Ovary (tissue), 10 donors: ENCODE measurements at regions of chr7 and their contacts with region 1.

Region 1: DNA sequence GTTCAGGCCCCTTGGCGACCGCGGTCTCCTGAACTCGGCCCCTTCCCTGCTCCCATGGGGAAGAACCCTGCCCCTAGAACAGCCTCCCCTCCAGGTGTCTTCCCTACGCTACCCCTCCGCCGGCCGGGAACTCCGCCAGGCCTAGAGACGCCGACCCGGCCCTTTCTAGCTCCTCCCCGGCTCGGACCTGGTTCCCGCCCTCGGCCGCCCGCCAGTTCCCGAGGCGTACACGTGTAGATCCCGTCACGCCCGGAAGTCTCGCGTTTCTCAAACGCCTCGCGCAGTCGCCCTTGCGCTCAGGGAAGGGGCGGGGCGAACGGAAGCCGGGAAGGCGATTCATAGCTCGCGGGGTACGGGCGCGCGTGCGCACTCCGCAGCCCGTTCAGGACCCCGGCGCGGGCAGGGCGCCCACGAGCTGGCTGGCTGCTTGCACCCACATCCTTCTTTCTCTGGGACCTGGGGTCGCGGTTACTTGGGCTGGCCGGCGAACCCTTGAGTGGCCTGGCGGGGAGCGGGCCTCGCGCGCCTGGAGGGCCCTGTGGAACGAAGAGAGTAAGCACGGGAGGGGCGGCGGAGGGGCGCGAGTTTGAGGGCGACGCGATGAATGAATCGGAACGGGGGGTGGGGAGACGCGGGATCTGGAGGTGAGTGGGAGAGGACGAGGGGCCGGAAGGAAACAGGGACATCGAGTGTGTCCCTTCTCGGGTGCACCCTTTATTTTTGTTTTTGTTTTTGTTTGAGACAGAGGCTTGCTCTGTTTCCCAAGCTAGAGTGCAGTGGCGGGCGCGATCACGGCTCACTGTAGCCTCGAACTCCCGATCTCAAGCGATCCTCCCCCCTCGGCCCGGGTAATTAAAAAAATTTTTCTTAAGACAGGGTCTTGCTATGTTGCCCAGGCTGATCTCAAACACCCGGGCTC is at the start of gene POP7:
- DNase-seq: peak; percentile 100
- H3K4me3 ChIP-seq: peak within 1 kb of the TSS; percentile 85
- H3K27ac ChIP-seq: peak within 1 kb of the TSS; percentile 83 to 91
- H3K4me1 ChIP-seq: peaks cover 7% of the 10 kb centered on the region
- H3K27me3 ChIP-seq: no peaks in the 10 kb centered on the region
- CTCF ChIP-seq: no peak
- EP300 ChIP-seq: no peak
- POLR2A ChIP-seq: peak; percentile 38
- total RNA-seq, gene POP7: 13.8 to 29.2 (median 22.2) TPM

Region 2: GRCh38 chr7:100516135-100516812 is 189.7 kb before region 1 on chr7:
- intact Hi-C with region 1: no loop called
- DNase-seq: peak in 4 of 5 donors; percentile 33 to 59 (median 40)
- H3K4me3 ChIP-seq: no peak overlapping the region
- H3K27ac ChIP-seq: no peak overlapping the region
- H3K4me1 ChIP-seq: peaks cover 2% of the 10 kb centered on the region
- H3K27me3 ChIP-seq: no peaks in the 10 kb centered on the region
- CTCF ChIP-seq: no peak
- EP300 ChIP-seq: no peak
- POLR2A ChIP-seq: no peak

Region 3: GRCh38 chr7:100563809-100564400 is 142.1 kb before region 1 on chr7:
- intact Hi-C with region 1: no loop called
- DNase-seq: peak; percentile 74 to 88 (median 85)
- H3K4me3 ChIP-seq: no peak overlapping the region
- H3K27ac ChIP-seq: peak overlapping the region in 1 of 2 donors; percentile 18
- H3K4me1 ChIP-seq: peaks cover 15% of the 10 kb centered on the region
- H3K27me3 ChIP-seq: no peaks in the 10 kb centered on the region
- CTCF ChIP-seq: peak; percentile 79 to 90 (median 87)
- EP300 ChIP-seq: no peak
- POLR2A ChIP-seq: no peak

Region 4: GRCh38 chr7:100655908-100656674 is 49.9 kb before region 1 on chr7 and contains the start of gene ACTL6B:
- intact Hi-C with region 1: loop called in 1 of 4 experiments (anchors 10 kb)
- DNase-seq: peak; percentile 29 to 77 (median 52)
- H3K4me3 ChIP-seq: no peak within 1 kb of the TSS
- H3K27ac ChIP-seq: no peak within 1 kb of the TSS
- H3K4me1 ChIP-seq: no peaks in the 10 kb centered on the region
- H3K27me3 ChIP-seq: no peaks in the 10 kb centered on the region
- CTCF ChIP-seq: no peak
- EP300 ChIP-seq: no peak
- POLR2A ChIP-seq: no peak
- total RNA-seq, gene ACTL6B: not detected

Region 5: DNA sequence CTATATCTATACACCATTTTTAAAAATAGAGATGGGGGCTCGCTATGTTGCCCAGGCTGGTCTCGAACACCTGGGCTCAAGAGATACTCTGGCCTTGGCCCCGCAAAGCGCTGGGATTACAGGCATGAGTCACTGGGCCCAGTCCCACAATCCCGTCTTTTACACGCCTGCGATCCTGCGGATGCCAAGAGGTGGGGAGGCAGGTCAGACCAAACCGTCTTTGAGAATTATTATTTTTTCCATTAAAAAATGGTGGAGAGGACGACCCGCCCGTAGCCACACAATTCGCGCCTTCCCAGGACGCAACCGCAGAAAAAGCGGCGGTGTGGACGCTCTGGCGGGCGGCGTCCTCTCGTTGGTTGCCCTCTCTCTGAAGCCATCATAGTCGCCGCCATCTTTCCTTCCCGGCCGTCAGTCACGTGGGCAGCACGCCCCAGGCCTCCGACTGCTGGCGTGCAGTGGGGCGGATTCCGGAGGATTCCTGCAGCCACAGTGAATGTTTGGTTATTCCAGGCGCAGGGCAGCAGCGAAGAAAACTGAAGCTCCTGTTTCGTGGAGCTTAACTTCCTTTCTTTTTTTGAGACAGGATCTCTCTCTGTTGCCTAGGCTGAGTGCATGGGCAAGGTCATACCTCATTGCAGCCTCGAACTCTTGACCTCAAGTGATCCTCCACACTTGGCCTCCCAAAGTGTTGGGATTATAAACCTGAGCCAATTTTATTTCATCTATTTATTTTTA is 131.3 kb after region 1 on chr7:
- intact Hi-C with region 1: loop called in 1 of 4 experiments (anchors 5 kb)
- DNase-seq: peak; percentile 89 to 94 (median 92)
- H3K4me3 ChIP-seq: peak overlapping the region; percentile 40
- H3K27ac ChIP-seq: peak overlapping the region in 1 of 2 donors; percentile 69
- H3K4me1 ChIP-seq: peaks cover 3% of the 10 kb centered on the region
- H3K27me3 ChIP-seq: no peaks in the 10 kb centered on the region
- CTCF ChIP-seq: no peak
- EP300 ChIP-seq: no peak
- POLR2A ChIP-seq: peak; percentile 50

Region 6: DNA sequence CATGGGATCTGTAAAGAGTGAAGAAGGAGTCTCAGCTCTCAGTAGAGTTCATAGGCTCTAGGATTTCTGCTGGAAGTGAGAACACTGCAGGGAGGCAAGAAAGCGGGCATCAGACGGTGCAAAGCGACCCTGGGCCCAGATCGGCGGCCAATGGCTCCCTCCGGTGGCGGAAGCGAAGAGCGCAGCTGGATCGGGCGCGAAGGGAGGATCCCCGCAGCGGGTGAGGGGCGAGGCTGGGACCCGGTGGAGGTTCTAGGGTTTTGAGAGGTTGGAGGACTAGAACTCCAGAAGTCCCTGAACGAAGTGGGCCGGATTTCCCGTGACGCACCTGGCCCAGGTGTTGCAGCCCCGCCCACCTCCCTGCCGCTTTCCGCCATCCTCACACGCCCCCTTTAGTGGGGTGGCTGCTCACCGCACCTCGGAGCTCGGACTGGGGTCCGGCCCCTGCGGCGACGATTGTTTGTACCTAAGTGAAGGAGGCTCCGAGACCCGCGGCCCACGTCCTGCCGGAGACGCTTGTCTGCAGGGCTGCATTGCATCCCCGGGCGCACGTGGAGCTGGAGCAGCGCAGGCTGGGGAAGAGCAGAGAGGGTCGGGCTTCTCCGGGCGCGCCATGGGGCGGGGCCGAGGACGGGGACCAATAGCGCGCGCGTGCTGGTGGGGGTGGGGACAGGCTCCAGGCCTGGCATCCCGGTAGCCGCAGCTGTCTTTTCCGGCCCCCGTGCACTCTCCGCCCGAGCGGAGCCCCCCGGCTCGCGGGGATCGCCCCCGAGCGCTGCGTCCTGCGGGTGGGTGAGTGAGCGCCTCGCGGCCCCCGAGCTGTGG is 146.2 kb after region 1 on chr7 and contains the start of gene SLC12A9:
- intact Hi-C with region 1: loop called in 3 of 4 experiments (anchors 2 to 5 kb)
- DNase-seq: peak; percentile 87 to 93 (median 90)
- H3K4me3 ChIP-seq: peak within 1 kb of the TSS; percentile 48
- H3K27ac ChIP-seq: peak within 1 kb of the TSS in 1 of 2 donors; percentile 66
- H3K4me1 ChIP-seq: no peaks in the 10 kb centered on the region
- H3K27me3 ChIP-seq: no peaks in the 10 kb centered on the region
- CTCF ChIP-seq: peak; percentile 94 to 95 (median 94)
- EP300 ChIP-seq: no peak
- POLR2A ChIP-seq: no peak
- total RNA-seq, gene SLC12A9: 10.1 to 31.8 (median 26.9) TPM

Region 7: GRCh38 chr7:100867040-100867775 is 161.2 kb after region 1 on chr7 and contains the start of gene TRIP6:
- intact Hi-C with region 1: loop called in 1 of 4 experiments (anchors 10 kb)
- DNase-seq: peak; percentile 97 to 99 (median 98)
- H3K4me3 ChIP-seq: peak within 1 kb of the TSS; percentile 99
- H3K27ac ChIP-seq: peak within 1 kb of the TSS; percentile 88 to 96
- H3K4me1 ChIP-seq: peaks cover 10% of the 10 kb centered on the region
- H3K27me3 ChIP-seq: no peaks in the 10 kb centered on the region
- CTCF ChIP-seq: peak in 1 of 3 donors; percentile 25
- EP300 ChIP-seq: no peak
- POLR2A ChIP-seq: peak; percentile 37
- total RNA-seq, gene TRIP6: 42.9 to 98.8 (median 82.0) TPM